A549 (cell line): ENCODE measurements at regions of chr1 and their contacts with region 1.

Region 1: GRCh38 chr1:3618881-3619671 is 5.7 kb upstream of the TPRG1L start:
- DNase-seq: peak; percentile 61 to 72
- ATAC-seq: peak; percentile 68 to 83
- H3K4me3 ChIP-seq: no peak overlapping the region
- H3K27ac ChIP-seq: no peak overlapping the region
- H3K4me1 ChIP-seq: peaks cover 13% of the 10 kb centered on the region; the same call in 2 of the 3 replicates
- CTCF ChIP-seq: peak; percentile 62
- EP300 ChIP-seq: no peak
- POLR2A ChIP-seq: no peak
- RAD21 ChIP-seq: peak; percentile 52 to 63

Region 2: DNA sequence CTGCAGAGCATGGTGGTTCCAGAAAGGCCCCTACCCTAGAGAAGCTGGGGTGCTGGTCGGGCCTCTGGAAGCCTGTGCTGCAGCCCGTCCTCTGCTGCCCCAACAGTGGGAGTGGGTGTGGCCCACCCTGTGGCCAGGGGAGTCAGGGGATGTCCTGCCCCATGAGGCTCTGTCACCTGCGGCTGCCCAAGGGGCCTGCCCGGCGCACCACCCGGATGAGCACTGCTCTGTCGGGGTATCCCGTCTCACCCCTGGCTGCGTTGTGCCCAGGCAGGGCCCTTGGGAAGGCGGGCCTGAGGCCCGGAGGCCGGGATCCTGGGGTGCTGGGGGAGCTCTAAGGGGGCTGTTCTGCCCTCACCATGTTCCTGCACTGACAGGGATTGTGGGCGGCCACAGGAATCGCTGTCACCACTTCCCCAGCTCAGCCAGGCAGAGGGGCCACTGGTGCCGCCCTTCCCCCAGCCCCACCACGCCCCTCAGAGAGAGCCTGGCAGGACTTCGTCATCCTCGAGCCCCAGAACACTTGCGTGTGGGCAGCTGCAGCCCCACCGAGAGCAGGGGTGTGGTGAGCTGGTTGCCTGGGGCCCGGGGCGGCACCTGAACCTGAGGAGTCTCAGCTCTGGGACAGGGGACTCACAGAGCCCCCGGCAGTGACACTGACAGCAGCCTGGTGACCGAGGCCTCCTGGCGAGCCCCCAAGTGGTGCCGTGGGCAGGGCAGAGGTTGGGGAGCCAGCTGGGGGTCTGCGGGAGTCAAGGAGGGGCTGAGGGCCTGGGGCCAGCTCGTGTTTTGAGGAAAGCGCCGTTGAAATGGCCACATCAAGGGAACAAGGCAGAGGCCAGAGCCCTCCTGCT is 1112.8 kb before region 1 on chr1:
- CTCF ChIA-PET with region 1: no interaction called
- POLR2A ChIA-PET with region 1: no interaction called
- DNase-seq: no peak
- ATAC-seq: peak in 1 of 2 experiments; percentile 4; a peak in 2 of 6 replicates
- H3K4me3 ChIP-seq: no peak overlapping the region
- H3K27ac ChIP-seq: no peak overlapping the region
- H3K4me1 ChIP-seq: no peaks in the 10 kb centered on the region
- CTCF ChIP-seq: no peak
- EP300 ChIP-seq: no peak
- POLR2A ChIP-seq: no peak
- RAD21 ChIP-seq: no peak

Region 3: GRCh38 chr1:3491291-3492246 is 127.5 kb before region 1 on chr1:
- CTCF ChIA-PET with region 1: interaction called, 58 read pairs
- POLR2A ChIA-PET with region 1: no interaction called
- DNase-seq: peak; percentile 39 to 52
- ATAC-seq: peak; percentile 81 to 91
- H3K4me3 ChIP-seq: no peak overlapping the region
- H3K27ac ChIP-seq: 0 out of 6 replicates have a peak overlapping the region, but pooled peaks of 1 of the 2 experiments have one; percentile 9
- H3K4me1 ChIP-seq: peaks cover 3% of the 10 kb centered on the region; the same call in 1 of the 3 replicates
- CTCF ChIP-seq: peak; percentile 76
- EP300 ChIP-seq: no peak
- POLR2A ChIP-seq: no peak
- RAD21 ChIP-seq: peak; percentile 71 to 84

Region 4: DNA sequence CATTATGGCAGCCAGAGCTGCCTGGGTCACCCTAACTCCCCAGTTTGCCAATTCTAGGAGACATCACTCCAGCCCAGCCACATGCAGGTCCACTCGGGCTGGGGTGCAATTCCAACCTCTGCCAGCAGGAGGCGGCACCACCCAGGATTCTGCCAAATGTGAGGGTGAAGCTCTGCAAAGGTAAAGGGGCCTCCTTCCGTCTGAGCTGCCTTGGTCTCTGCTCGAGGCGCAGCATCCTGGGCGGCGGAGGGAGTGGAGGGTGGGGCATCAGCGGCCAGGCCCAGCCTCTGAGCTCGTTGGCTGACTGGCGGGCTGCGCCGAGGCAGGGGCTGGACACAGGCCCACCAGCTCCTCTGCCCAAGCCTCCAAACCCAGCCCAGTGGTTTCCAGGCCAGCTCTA is 100.8 kb before region 1 on chr1:
- CTCF ChIA-PET with region 1: interaction called, 10 read pairs
- POLR2A ChIA-PET with region 1: no interaction called
- DNase-seq: no peak
- ATAC-seq: no peak
- H3K4me3 ChIP-seq: no peak overlapping the region
- H3K27ac ChIP-seq: no peak overlapping the region
- H3K4me1 ChIP-seq: no peaks in the 10 kb centered on the region
- CTCF ChIP-seq: 0 out of 3 replicates have a peak, but pooled peaks have one; percentile 16
- EP300 ChIP-seq: no peak
- POLR2A ChIP-seq: no peak
- RAD21 ChIP-seq: no peak

Region 5: GRCh38 chr1:3586932-3587678 is 32.0 kb before region 1 on chr1:
- CTCF ChIA-PET with region 1: interaction called, 15 read pairs
- POLR2A ChIA-PET with region 1: no interaction called
- DNase-seq: peak; percentile 21 to 45
- ATAC-seq: peak; percentile 79 to 90
- H3K4me3 ChIP-seq: no peak overlapping the region
- H3K27ac ChIP-seq: peak overlapping the region in 1 of 2 experiments; percentile 74; a peak in 3 of 6 replicates
- H3K4me1 ChIP-seq: peaks cover 9% of the 10 kb centered on the region; the same call in 2 of the 3 replicates
- CTCF ChIP-seq: no peak
- EP300 ChIP-seq: no peak
- POLR2A ChIP-seq: no peak
- RAD21 ChIP-seq: no peak

Region 6: GRCh38 chr1:3631330-3632262 is 12.5 kb after region 1 on chr1:
- CTCF ChIA-PET with region 1: interaction called, 33 read pairs
- POLR2A ChIA-PET with region 1: no interaction called
- DNase-seq: no peak
- ATAC-seq: no peak; a peak in 1 of 6 replicates
- H3K4me3 ChIP-seq: no peak overlapping the region
- H3K27ac ChIP-seq: no peak overlapping the region
- H3K4me1 ChIP-seq: no peaks in the 10 kb centered on the region
- CTCF ChIP-seq: no peak
- EP300 ChIP-seq: no peak
- POLR2A ChIP-seq: no peak
- RAD21 ChIP-seq: no peak